A549 (cell line): ENCODE measurements at regions of chr11 and their contacts with region 1.

Region 1: GRCh38 chr11:34174412-34175041 is 69.1 kb downstream of the NAT10 start:
- DNase-seq: peak; percentile 75 to 80
- ATAC-seq: peak; percentile 98 to 99
- H3K4me3 ChIP-seq: peak overlapping the region; percentile 32
- H3K27ac ChIP-seq: peak overlapping the region; percentile 66 to 82
- H3K4me1 ChIP-seq: peaks cover 25% of the 10 kb centered on the region
- CTCF ChIP-seq: peak; percentile 93
- EP300 ChIP-seq: no peak
- POLR2A ChIP-seq: no peak
- RAD21 ChIP-seq: peak; percentile 98 to 100

Region 2: GRCh38 chr11:34149786-34150185 is 24.7 kb before region 1 on chr11:
- CTCF ChIA-PET with region 1: interaction called, 40 read pairs
- POLR2A ChIA-PET with region 1: no interaction called
- DNase-seq: peak; percentile 33 to 36
- ATAC-seq: peak; percentile 57 to 80
- H3K4me3 ChIP-seq: no peak overlapping the region
- H3K27ac ChIP-seq: no peak overlapping the region
- H3K4me1 ChIP-seq: no peaks in the 10 kb centered on the region
- CTCF ChIP-seq: peak; percentile 34
- EP300 ChIP-seq: no peak
- POLR2A ChIP-seq: no peak
- RAD21 ChIP-seq: peak; percentile 54 to 62

Region 3: GRCh38 chr11:34198523-34198922 is 24.0 kb after region 1 on chr11:
- CTCF ChIA-PET with region 1: interaction called, 21 read pairs
- POLR2A ChIA-PET with region 1: interaction called, 8 read pairs
- DNase-seq: no peak
- ATAC-seq: no peak
- H3K4me3 ChIP-seq: no peak overlapping the region
- H3K27ac ChIP-seq: no peak overlapping the region
- H3K4me1 ChIP-seq: peaks cover 12% of the 10 kb centered on the region
- CTCF ChIP-seq: no peak
- EP300 ChIP-seq: no peak
- POLR2A ChIP-seq: no peak
- RAD21 ChIP-seq: no peak

Region 4: GRCh38 chr11:34242037-34242625 is 67.6 kb after region 1 on chr11:
- CTCF ChIA-PET with region 1: interaction called, 27 read pairs
- POLR2A ChIA-PET with region 1: interaction called, 9 read pairs
- DNase-seq: peak; percentile 33 to 65
- ATAC-seq: peak; percentile 16 to 37; a peak in 2 of 6 replicates
- H3K4me3 ChIP-seq: no peak overlapping the region
- H3K27ac ChIP-seq: peak overlapping the region; percentile 80 to 92
- H3K4me1 ChIP-seq: peaks cover 70% of the 10 kb centered on the region
- CTCF ChIP-seq: no peak
- EP300 ChIP-seq: no peak
- POLR2A ChIP-seq: no peak
- RAD21 ChIP-seq: no peak

Region 5: GRCh38 chr11:34274723-34275401 is 100.3 kb after region 1 on chr11:
- CTCF ChIA-PET with region 1: interaction called, 20 read pairs
- POLR2A ChIA-PET with region 1: interaction called, 4 read pairs
- DNase-seq: peak; percentile 94 to 96
- ATAC-seq: peak; percentile 96 to 100
- H3K4me3 ChIP-seq: no peak overlapping the region
- H3K27ac ChIP-seq: peak overlapping the region; percentile 72 to 90
- H3K4me1 ChIP-seq: peaks cover 41% of the 10 kb centered on the region
- CTCF ChIP-seq: no peak
- EP300 ChIP-seq: peak; percentile 68 to 75; a peak in 4 of 5 replicates
- POLR2A ChIP-seq: no peak
- RAD21 ChIP-seq: peak; percentile 24 to 47; a peak in 4 of 5 replicates

Region 6: DNA sequence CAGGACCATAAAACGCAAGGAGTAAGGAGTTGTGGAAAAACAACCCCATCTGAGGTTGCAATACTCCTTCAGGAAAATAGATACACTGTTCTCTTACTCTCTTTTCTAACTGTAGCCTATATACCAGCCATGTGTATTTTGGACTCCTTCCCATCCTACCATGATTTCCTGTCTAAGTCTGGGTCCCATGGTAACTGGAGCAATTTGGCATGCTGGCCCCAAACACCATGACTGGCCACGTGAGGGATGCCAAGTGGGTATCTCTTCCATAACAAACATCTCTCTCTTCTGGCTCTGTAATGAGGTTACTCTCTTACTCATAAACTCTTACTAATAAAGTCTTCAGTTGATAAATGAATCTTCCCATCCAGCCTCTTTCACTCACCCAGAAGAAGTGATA is 156.8 kb after region 1 on chr11:
- CTCF ChIA-PET with region 1: interaction called, 11 read pairs
- POLR2A ChIA-PET with region 1: no interaction called
- DNase-seq: peak; percentile 64 to 67
- ATAC-seq: peak; percentile 57 to 80; a peak in 5 of 6 replicates
- H3K4me3 ChIP-seq: no peak overlapping the region
- H3K27ac ChIP-seq: peak overlapping the region; percentile 34 to 68; a peak in 4 of 6 replicates
- H3K4me1 ChIP-seq: peaks cover 74% of the 10 kb centered on the region
- CTCF ChIP-seq: no peak
- EP300 ChIP-seq: no peak
- POLR2A ChIP-seq: no peak
- RAD21 ChIP-seq: no peak

Region 7: DNA sequence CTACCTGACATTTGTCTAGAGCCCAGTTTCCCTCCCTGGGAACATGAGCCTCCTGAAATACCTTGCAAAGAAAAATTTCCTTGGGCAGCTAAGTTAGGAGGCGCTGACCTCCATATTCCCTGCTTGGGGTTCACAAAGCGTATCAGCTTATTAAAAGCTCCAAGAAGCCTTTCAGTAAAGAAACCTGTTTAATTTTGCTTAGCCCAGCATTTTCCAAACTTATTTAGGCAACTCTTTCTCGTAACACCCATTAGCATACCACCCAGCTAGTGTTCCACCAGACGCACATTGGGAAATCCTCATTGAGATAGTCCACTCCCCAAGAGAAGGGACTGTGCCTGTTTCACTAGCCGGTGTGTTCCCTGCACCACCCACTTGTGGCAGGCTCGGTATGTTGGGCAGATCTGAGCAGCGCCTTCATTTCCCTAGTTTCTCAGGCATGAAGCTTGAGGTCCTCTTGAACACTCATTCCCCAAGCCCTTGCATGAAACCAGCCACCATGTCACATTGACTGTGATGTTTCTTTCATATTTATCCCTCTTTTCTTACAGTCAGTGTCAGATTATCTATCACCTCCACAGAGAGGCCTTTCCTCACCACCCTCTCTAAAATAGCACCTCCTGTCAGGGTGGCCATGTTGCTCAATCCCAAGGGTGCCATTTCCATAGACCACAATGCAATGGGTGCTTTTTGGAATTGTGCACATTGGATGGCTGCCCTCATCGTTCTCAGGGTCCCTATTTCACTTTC is 351.5 kb after region 1 on chr11:
- CTCF ChIA-PET with region 1: no interaction called
- POLR2A ChIA-PET with region 1: no interaction called
- DNase-seq: no peak
- ATAC-seq: no peak
- H3K4me3 ChIP-seq: no peak overlapping the region
- H3K27ac ChIP-seq: no peak overlapping the region
- H3K4me1 ChIP-seq: 0 out of 3 replicates have a peak, but pooled peaks cover 6% of the 10 kb centered on the region
- CTCF ChIP-seq: no peak
- EP300 ChIP-seq: no peak
- POLR2A ChIP-seq: no peak
- RAD21 ChIP-seq: no peak